IMR-90 (cell line): ENCODE measurements at regions of chr13 and their contacts with region 1.

Region 1: DNA sequence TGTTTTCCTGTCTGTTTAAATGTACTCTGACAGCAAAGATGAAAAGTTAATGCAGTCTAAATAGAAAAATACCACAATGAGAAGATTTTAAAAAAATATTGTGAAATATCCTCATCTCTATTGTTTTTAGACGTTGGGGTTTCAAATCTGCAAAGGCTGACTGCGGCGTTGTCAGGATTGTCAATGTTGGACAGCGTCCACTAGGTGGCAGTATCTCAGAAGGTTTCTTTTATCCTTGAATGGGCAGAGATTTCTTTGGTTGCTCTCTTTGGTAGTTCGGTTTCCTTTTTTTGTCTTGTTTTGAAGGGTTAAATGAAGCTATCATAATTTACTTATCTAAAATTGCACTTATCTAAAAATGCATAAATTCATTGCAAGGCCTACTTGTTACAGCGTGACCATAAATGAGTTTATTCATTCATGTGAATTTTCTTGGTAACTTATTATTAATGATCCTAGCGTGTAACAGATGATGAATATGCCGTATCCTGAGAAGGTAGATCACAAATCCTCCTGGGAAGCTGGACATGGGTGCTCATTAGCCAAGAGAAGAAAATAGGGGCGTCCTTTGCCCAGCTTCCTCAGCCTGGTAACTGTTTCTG is 21.1 kb downstream of the TNFSF11 start:
- DNase-seq: peak; percentile 66
- ATAC-seq: peak; percentile 93
- H3K4me3 ChIP-seq: no peak overlapping the region
- H3K27ac ChIP-seq: no peak overlapping the region
- H3K4me1 ChIP-seq: no peaks in the 10 kb centered on the region
- H3K27me3 ChIP-seq: peaks cover 32% of the 10 kb centered on the region
- CTCF ChIP-seq: peak; percentile 81
- POLR2A ChIP-seq: no peak
- RAD21 ChIP-seq: peak; percentile 85

Region 2: DNA sequence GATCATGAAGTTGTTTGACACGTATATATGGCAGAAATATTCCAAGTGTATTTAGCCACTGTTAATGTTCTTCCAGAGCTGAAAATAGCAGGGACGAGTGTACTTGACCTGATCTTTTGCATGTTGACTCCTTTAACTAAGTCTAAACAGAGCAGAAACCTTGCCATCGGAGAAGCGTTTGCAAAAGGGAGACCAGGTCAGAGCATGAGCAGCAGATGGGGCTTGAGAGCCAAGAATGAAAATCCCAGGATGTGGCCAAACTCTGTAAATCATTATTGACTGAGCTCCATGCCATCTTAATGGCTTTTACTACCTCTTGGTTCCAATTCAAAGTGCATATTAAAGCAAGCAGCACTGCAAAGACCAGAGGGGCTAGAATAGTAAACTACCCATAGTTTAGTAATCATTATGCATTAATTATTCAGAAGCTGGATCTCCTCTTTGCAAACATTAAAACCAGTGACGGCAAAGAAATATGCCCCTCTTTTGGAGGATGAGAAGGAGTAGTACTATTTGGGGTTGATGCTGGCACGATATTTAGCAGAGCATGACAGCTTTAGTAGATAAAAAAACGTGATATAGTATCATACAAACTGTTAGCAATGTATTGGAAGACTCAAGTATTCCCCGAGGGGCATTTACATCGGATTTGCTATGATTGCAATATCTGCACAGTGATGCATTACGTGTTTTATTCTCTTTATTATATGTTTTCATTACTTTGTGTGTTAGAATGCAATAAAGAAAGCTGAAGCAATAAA is 242.0 kb after region 1 on chr13:
- CTCF ChIA-PET with region 1: no interaction called
- POLR2A ChIA-PET with region 1: no interaction called
- dilution Hi-C with region 1: no loop called
- in situ Hi-C with region 1: no loop called
- intact Hi-C with region 1: loop called (anchors 10 kb)
- DNase-seq: peak; percentile 51
- ATAC-seq: peak; percentile 70
- H3K4me3 ChIP-seq: no peak overlapping the region
- H3K27ac ChIP-seq: no peak overlapping the region
- H3K4me1 ChIP-seq: peaks cover 2% of the 10 kb centered on the region; the same call in 1 of the 2 replicates
- H3K27me3 ChIP-seq: peaks cover 2% of the 10 kb centered on the region
- CTCF ChIP-seq: peak; percentile 49
- POLR2A ChIP-seq: no peak
- RAD21 ChIP-seq: peak; percentile 59

Region 3: GRCh38 chr13:42969558-42970172 is 374.6 kb after region 1 on chr13:
- CTCF ChIA-PET with region 1: no interaction called
- POLR2A ChIA-PET with region 1: no interaction called
- dilution Hi-C with region 1: no loop called
- in situ Hi-C with region 1: no loop called
- intact Hi-C with region 1: loop called (anchors 5 kb)
- DNase-seq: peak; percentile 69
- ATAC-seq: peak; percentile 89
- H3K4me3 ChIP-seq: no peak overlapping the region
- H3K27ac ChIP-seq: no peak overlapping the region
- H3K4me1 ChIP-seq: peaks cover 12% of the 10 kb centered on the region
- H3K27me3 ChIP-seq: no peaks in the 10 kb centered on the region
- CTCF ChIP-seq: peak; percentile 77
- POLR2A ChIP-seq: no peak
- RAD21 ChIP-seq: peak; percentile 71

Region 4: DNA sequence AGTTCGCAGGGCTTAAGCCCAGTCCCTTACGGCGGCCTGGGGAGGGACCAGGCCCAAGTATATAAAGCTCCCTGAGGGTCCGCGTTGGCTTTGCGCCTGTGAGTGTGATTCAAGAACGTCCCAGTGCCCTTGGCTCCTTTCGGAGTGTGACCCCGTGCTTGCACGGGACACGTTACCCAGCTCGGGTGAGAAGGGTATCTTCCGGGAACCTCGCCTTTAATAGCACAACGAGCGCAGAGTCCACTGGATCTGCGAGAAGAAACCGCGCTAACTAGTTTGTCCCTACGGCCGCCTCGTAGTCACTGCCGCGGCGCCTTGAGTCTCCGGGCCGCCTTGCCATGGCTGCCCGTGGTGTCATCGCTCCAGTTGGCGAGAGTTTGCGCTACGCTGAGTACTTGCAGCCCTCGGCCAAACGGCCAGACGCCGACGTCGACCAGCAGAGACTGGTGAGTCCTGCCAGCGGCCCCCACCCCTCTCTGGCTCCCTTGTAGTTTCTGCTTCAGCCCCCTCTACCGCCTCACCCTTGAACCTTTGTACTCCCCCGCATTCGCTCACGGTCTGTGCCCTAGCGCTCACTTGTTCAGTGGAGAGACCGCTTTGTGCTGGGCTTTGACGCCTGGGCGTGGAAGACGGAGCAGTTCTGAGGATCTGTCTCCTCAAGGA is 428.3 kb after region 1 on chr13 and contains the start of gene DNAJC15:
- CTCF ChIA-PET with region 1: interaction called, 3 read pairs
- POLR2A ChIA-PET with region 1: no interaction called
- dilution Hi-C with region 1: no loop called
- in situ Hi-C with region 1: no loop called
- intact Hi-C with region 1: loop called (anchors 10 kb)
- DNase-seq: peak; percentile 83
- ATAC-seq: peak; percentile 88
- H3K4me3 ChIP-seq: peak within 1 kb of the TSS; percentile 59
- H3K27ac ChIP-seq: peak within 1 kb of the TSS; percentile 95
- H3K4me1 ChIP-seq: peaks cover 3% of the 10 kb centered on the region
- H3K27me3 ChIP-seq: no peaks in the 10 kb centered on the region
- CTCF ChIP-seq: 0 out of 2 replicates have a peak, but pooled peaks have one; percentile 0
- POLR2A ChIP-seq: peak; percentile 44
- RAD21 ChIP-seq: no peak
- total RNA-seq, gene DNAJC15: 7.0 and 12.5 TPM in 2 replicates

Region 5: GRCh38 chr13:43303033-43303729 is 708.1 kb after region 1 on chr13:
- CTCF ChIA-PET with region 1: no interaction called
- POLR2A ChIA-PET with region 1: no interaction called
- dilution Hi-C with region 1: no loop called
- in situ Hi-C with region 1: no loop called
- intact Hi-C with region 1: loop called (anchors 10 kb)
- DNase-seq: peak; percentile 70
- ATAC-seq: peak; percentile 68
- H3K4me3 ChIP-seq: no peak overlapping the region
- H3K27ac ChIP-seq: peak overlapping the region; percentile 2; the same call in 1 of the 2 replicates
- H3K4me1 ChIP-seq: peaks cover 13% of the 10 kb centered on the region
- H3K27me3 ChIP-seq: no peaks in the 10 kb centered on the region
- CTCF ChIP-seq: peak; percentile 59
- POLR2A ChIP-seq: no peak
- RAD21 ChIP-seq: peak; percentile 64

Region 6: DNA sequence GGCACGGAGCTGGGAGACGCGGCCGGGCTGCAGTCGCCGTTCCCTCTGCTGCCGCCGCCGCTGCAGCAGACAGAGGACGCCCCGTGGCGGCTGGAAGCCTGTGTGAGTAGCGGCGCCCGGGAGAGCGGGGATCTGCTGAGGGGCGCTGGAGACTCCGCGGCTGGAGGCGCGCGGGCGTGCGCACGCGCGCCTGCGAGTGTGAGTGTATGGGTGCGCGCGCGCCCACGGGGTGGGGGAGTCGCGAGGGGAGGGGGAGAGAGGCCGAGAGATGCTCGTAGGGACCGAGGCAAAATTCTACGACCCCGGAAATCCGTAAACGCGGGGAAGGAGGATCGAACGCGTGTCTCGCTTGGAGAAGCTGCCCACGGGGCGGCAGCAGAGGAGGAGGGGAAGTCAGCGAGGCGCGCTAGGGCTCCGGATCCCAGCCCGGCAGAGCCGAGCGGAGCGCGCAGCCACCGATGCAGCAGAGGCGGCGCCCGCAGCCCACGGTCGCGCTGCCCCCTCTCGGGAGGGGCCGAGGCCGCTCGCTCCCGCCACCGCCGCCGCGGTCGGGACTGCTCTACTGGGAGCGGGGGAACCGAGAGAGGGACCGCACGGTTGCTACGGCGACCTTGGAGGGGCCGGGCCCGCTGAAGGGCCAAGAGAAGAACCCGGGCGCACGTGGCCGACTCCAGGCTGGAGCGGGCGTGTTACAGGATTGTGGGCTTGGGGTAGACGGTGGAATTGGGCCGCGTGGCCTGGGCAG is 1191.9 kb after region 1 on chr13 and contains the start of gene ENOX1:
- CTCF ChIA-PET with region 1: no interaction called
- POLR2A ChIA-PET with region 1: no interaction called
- dilution Hi-C with region 1: no loop called
- in situ Hi-C with region 1: loop called (anchors 25 kb)
- intact Hi-C with region 1: loop called (anchors 5 kb)
- DNase-seq: peak; percentile 74
- ATAC-seq: peak; percentile 79
- H3K4me3 ChIP-seq: peak within 1 kb of the TSS; percentile 52
- H3K27ac ChIP-seq: peak within 1 kb of the TSS; percentile 11
- H3K4me1 ChIP-seq: no peaks in the 10 kb centered on the region
- H3K27me3 ChIP-seq: no peaks in the 10 kb centered on the region; the same call in 1 of the 2 replicates
- CTCF ChIP-seq: peak; percentile 18; the same call in 1 of the 2 replicates
- POLR2A ChIP-seq: no peak
- RAD21 ChIP-seq: peak; percentile 36
- total RNA-seq, gene ENOX1: 1.3 and 1.9 TPM in 2 replicates

Region 7: DNA sequence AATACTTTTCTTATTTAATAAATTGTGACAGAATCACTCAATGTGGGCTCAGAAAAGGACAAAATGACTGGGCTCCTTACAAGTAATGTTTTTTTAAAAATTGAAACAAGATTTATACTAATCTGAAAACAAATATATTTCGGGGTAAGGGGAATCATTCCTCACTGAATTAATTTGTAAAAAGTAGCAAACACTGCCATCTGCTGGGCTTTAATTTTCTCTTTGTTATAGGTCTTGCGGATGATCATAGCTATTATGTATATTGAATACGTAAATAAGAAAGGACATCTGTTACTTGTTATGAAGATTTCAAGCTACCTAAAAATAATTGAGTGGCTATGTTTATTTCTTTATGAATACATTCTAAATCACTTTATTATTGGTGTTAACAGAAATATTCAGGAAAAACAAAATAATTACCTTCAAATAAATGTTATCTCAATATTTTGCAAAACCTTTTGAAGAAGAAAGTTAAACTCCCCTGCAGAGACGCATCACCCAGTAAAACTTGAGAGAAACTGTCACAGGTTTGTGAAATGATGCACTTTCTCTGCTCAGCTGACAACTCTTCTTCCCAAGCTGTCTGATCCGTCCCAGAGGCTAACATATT is 1209.5 kb after region 1 on chr13:
- CTCF ChIA-PET with region 1: no interaction called
- POLR2A ChIA-PET with region 1: no interaction called
- dilution Hi-C with region 1: no loop called
- in situ Hi-C with region 1: loop called (anchors 25 kb)
- intact Hi-C with region 1: loop called (anchors 5 kb)
- DNase-seq: peak; percentile 78
- ATAC-seq: peak; percentile 82
- H3K4me3 ChIP-seq: peak overlapping the region; percentile 3; the same call in 1 of the 2 replicates
- H3K27ac ChIP-seq: peak overlapping the region; percentile 50; the same call in 1 of the 2 replicates
- H3K4me1 ChIP-seq: peaks cover 2% of the 10 kb centered on the region; the same call in 1 of the 2 replicates
- H3K27me3 ChIP-seq: no peaks in the 10 kb centered on the region
- CTCF ChIP-seq: peak; percentile 64
- POLR2A ChIP-seq: no peak
- RAD21 ChIP-seq: peak; percentile 64